Ascending aorta (tissue), 2 donors: ENCODE measurements at regions of chr3 and their contacts with region 1.

Region 1: GRCh38 chr3:121749276-121750086 is at the start of gene GOLGB1:
- DNase-seq: peak; percentile 94 to 98
- H3K4me3 ChIP-seq: peak within 1 kb of the TSS; percentile 86 to 95
- H3K27ac ChIP-seq: peak within 1 kb of the TSS; percentile 92 to 97
- H3K4me1 ChIP-seq: peaks cover 2 to 19% of the 10 kb centered on the region in 2 donors
- H3K27me3 ChIP-seq: no peaks in the 10 kb centered on the region
- CTCF ChIP-seq: no peak
- total RNA-seq, gene GOLGB1: 87.9 TPM

Region 2: DNA sequence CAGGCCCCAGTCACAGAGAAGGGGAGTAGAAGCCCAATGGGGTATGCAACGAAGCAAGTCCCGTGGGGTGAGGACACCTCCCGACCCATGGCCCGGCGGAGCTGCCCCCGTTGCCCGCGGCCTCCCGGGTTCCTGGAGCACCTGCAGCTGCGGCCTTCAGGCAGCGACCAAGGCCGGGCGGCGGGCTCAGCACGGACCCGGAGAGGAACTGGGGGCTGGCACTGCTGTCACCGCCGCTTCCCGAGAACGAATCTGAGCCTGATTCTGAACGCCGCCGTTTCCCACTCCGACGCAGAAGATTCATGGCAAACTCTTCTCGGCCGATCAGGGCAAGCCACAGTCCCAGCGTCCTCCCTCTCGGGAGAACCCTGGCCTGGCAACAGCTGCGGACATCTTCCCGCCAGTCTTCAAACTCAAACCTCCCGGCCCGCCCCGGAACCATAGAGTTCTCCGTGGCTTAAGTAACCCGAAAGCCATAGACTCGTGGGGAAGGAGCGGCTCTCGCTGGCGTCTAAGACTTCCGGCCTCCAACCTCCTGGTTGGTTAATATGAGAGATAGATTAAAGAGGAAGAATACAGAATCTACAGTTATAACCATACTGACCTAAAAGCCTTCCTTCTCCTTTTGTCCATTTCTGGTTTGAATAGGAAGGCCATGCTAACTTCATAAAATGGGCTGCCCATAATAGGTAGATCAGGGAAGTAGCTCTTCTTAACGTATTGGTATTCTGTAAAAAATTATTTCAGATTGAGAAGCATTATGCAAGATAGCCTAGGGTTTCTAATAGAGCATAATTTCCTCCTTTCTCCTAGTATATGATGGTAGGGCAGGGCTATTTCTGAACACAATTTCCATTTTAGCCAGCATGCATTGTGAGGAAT is 203.7 kb before region 1 on chr3 and contains the start of gene POLQ:
- intact Hi-C with region 1: loop called (anchors 5 kb)
- DNase-seq: peak; percentile 65 to 93
- H3K4me3 ChIP-seq: peak within 1 kb of the TSS; percentile 55 to 66
- H3K27ac ChIP-seq: peak within 1 kb of the TSS; percentile 43 to 58
- H3K4me1 ChIP-seq: peaks cover 3 to 5% of the 10 kb centered on the region in 2 donors
- H3K27me3 ChIP-seq: no peaks in the 10 kb centered on the region
- CTCF ChIP-seq: no peak
- total RNA-seq, gene POLQ: not detected

Region 3: DNA sequence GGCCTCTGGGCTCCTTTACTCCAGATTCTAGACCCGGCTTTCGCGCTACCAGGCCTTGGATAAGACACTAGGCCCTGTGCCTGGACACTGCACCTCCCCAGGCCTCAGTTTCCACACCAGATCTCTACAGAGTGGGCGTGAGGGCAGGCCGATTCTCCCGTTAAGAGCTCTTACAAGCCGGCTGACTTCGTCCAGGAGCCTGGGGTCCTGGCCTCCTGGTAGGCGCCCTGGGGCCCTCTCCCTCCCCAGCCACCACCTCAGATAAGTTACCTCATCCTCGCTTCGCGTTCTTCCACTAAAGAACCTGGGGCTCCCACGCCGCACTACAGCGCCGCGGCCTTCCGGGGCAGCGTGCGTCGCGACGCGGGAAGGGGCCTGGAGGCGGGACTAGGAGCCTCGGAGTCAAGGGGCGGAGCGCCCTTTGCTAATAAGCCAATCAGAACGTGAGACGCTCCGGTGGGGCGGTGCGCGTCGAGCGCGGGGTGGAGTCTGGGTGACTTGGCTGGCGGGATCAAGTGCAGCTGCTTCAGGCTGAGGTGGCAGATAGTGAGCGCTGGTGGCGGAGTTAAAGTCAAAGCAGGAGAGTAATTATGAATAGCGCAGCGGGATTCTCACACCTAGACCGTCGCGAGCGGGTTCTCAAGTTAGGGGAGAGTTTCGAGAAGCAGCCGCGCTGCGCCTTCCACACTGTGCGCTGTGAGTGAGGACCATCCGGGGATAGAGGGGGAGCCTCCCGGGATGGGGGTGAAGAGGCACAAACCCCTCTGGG is 85.4 kb after region 1 on chr3 and contains the starts of genes EAF2 and IQCB1:
- intact Hi-C with region 1: loop called (anchors 2 kb)
- DNase-seq: peak; percentile 85 to 98
- H3K4me3 ChIP-seq: peak within 1 kb of the TSS; percentile 82 to 87
- H3K27ac ChIP-seq: peak within 1 kb of the TSS; percentile 67 to 82
- H3K4me1 ChIP-seq: peaks cover 0 to 18% of the 10 kb centered on the region in 2 donors
- H3K27me3 ChIP-seq: no peaks in the 10 kb centered on the region
- CTCF ChIP-seq: no peak
- total RNA-seq, gene EAF2: 2.4 TPM
- total RNA-seq, gene IQCB1: 2.9 TPM

Region 4: GRCh38 chr3:122383771-122384697 is 634.6 kb after region 1 on chr3 and contains the start of gene FAM162A:
- intact Hi-C with region 1: loop called (anchors 10 kb)
- DNase-seq: peak; percentile 68 to 96
- H3K4me3 ChIP-seq: peak within 1 kb of the TSS; percentile 73 to 76
- H3K27ac ChIP-seq: peak within 1 kb of the TSS; percentile 82 to 90
- H3K4me1 ChIP-seq: peaks cover 0 to 6% of the 10 kb centered on the region in 2 donors
- H3K27me3 ChIP-seq: no peaks in the 10 kb centered on the region
- CTCF ChIP-seq: peak; percentile 43 to 61 (median 48)
- total RNA-seq, gene FAM162A: 17.1 TPM

Region 5: DNA sequence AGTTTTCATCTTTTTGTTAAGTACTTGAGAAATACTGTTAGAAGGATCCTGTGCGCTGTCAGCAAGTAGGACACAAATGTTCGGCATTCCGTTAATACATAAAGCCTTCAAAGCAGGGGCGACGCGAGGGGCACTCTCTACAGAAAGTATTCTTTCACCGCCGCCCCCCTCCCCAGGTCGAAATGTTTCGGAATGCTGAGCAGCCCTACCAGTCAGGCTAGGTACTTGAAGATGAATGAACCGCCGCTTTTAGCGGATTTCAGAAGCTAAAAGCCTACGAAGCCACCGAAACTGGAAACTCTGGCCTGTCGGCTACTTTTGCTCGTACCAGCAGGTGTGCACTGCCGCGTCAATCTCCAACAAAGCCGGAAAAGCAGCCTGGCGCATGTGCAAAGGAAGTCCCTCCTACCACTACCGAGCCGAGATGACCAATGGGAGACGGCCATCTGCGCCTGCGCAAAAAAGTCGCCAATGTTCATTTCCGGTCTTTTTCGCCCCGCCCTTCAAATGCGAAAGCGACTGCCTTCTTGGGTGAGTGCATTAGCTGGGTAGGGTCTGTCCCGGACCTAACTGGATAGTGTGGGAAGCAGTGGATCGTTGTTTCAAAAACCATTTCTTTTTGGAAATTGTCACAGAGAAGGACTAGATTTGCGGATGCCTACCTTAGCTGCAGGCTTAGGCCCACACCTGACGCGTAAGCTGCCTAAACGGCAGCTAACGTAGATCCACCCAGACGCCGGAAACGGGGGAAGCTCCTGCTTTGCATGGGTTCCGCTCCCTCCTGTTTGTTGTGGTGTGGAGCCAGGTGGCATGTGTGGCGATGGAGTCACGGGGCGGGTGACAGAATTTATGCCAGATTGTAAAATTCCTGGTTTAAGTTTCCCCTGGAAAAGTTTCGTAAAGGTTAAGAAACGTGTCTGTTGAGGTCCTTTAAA is 666.5 kb after region 1 on chr3 and contains the start of gene WDR5B:
- intact Hi-C with region 1: loop called (anchors 1 kb)
- DNase-seq: peak; percentile 86 to 98
- H3K4me3 ChIP-seq: peak within 1 kb of the TSS; percentile 84 to 94
- H3K27ac ChIP-seq: peak within 1 kb of the TSS; percentile 91 to 94
- H3K4me1 ChIP-seq: peaks cover 8 to 16% of the 10 kb centered on the region in 2 donors
- H3K27me3 ChIP-seq: no peaks in the 10 kb centered on the region
- CTCF ChIP-seq: no peak
- total RNA-seq, gene WDR5B: 1.8 TPM

Region 6: GRCh38 chr3:122793568-122794416 is 1044.3 kb after region 1 on chr3 and contains the start of gene HSPBAP1:
- intact Hi-C with region 1: loop called (anchors 5 kb)
- DNase-seq: peak; percentile 74 to 96
- H3K4me3 ChIP-seq: peak within 1 kb of the TSS; percentile 89 to 98
- H3K27ac ChIP-seq: peak within 1 kb of the TSS; percentile 96 to 100
- H3K4me1 ChIP-seq: peaks cover 3 to 5% of the 10 kb centered on the region in 2 donors
- H3K27me3 ChIP-seq: no peaks in the 10 kb centered on the region
- CTCF ChIP-seq: no peak
- total RNA-seq, gene HSPBAP1: 2.4 TPM